ENCODE measurements at regions of chr16 and their contacts with region 1.

Region 1: DNA sequence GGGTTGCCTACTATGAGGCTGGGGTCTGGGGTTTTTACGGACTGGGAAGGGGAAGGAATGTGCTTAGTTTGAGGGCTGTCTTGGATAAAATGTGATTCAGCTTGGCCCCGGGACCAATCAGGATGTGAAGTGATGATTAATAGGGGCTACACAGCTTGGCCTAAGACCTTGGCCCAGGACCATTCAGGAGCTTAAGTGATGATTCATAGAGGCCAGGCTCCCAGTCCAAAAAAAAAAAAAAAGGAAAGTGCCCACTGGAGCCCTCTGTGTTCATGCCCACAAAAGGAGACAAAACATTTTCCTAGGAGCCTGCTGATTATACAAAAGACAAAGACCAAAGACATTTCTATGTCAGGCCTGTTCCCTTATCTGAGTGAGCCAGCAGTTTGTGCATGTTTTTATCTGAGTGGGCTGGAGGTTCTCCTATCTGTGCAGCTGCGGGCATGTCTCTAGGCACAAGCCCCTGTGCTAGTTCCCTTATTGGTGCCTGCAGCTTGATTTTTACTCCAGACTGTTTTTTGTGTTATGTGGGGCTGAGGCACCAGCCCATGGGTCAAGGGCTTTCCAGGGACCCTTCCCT is 898.2 kb upstream of the GOT2 start:
- DNase-seq: no peak
- ATAC-seq: no peak
- H3K4me3 ChIP-seq: no peak overlapping the region
- H3K27ac ChIP-seq: no peak overlapping the region
- H3K4me1 ChIP-seq: no peaks in the 10 kb centered on the region
- H3K27me3 ChIP-seq: no peaks in the 10 kb centered on the region
- CTCF ChIP-seq: no peak
- POLR2A ChIP-seq: no peak

Region 2: DNA sequence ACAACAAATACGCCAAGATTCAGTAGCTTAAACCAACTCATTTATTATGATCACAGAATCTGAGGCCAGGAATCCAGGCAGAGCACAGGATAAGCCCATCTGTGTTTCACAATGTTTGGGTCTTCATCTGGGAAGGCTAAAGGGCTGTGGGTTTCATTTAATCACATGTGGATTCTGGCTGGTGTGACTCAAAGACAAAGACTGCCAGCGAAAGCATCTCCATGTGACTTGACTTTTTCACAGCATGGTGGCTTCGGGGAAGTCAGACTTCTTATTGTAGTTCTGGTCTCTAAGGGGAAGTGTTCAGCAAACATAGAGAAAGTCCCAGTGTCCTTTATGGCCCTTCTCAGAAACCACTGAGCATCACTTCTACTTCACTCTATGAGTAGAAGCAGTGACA is 116.2 kb after region 1 on chr16:
- in situ Hi-C with region 1: loop called in 1 of 4 experiments (anchors 25 kb)
- intact Hi-C with region 1: no loop called
- DNase-seq: no peak
- ATAC-seq: no peak
- H3K4me3 ChIP-seq: no peak overlapping the region
- H3K27ac ChIP-seq: no peak overlapping the region
- H3K4me1 ChIP-seq: no peaks in the 10 kb centered on the region
- H3K27me3 ChIP-seq: no peaks in the 10 kb centered on the region
- CTCF ChIP-seq: no peak
- POLR2A ChIP-seq: no peak

Region 3: GRCh38 chr16:59758848-59759247 is 126.5 kb after region 1 on chr16:
- in situ Hi-C with region 1: no loop called
- intact Hi-C with region 1: no loop called
- DNase-seq: no peak
- ATAC-seq: no peak
- H3K4me3 ChIP-seq: no peak overlapping the region
- H3K27ac ChIP-seq: no peak overlapping the region
- H3K4me1 ChIP-seq: no peaks in the 10 kb centered on the region
- H3K27me3 ChIP-seq: no peaks in the 10 kb centered on the region
- CTCF ChIP-seq: no peak
- POLR2A ChIP-seq: no peak